ENCODE measurements at regions of chr12 and their contacts with region 1.

Region 1: DNA sequence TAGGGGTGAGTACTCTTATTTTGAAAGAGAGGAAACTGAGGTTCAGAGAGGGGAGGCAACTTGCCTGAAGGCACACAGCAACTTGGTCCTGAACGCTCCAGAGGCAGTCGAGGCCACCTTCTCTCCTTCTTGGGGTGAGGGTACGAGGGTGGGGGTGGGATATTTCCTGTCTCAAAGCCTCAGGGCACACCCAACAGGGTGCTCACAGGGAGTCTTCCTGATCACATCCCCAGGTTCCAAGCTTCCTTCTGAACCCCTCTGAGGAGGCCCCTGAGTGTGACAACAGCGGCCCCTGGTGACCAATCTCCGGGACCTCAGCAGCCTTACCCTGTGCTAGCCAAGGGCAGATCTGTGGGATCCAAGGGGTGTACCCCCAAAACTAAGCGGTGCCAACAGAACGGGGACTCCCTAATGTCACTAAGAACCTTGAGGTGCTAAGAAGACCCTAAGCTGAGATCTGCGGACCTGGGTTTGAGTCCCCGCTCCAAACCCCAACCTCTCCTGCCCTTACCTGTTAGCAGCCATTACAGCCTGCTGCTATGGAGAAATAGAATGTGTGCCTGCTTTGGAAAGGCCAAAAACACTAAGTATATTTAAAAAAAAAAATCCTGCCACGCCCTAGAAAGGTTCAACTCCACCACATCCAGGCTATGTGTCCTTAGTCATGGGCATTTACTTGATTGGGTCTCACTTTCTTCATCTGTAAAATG is 57.9 kb downstream of the TRPV4 start:
- DNase-seq: peak; percentile 68 to 89 (median 78)
- H3K4me3 ChIP-seq: no peak overlapping the region
- H3K27ac ChIP-seq: peak overlapping the region in 11 of 59 donors; percentile 12 to 86 (median 69)
- H3K27me3 ChIP-seq: no peaks in the 10 kb centered on the region
- CTCF ChIP-seq: peak; percentile 49 to 96 (median 88)

Region 2: DNA sequence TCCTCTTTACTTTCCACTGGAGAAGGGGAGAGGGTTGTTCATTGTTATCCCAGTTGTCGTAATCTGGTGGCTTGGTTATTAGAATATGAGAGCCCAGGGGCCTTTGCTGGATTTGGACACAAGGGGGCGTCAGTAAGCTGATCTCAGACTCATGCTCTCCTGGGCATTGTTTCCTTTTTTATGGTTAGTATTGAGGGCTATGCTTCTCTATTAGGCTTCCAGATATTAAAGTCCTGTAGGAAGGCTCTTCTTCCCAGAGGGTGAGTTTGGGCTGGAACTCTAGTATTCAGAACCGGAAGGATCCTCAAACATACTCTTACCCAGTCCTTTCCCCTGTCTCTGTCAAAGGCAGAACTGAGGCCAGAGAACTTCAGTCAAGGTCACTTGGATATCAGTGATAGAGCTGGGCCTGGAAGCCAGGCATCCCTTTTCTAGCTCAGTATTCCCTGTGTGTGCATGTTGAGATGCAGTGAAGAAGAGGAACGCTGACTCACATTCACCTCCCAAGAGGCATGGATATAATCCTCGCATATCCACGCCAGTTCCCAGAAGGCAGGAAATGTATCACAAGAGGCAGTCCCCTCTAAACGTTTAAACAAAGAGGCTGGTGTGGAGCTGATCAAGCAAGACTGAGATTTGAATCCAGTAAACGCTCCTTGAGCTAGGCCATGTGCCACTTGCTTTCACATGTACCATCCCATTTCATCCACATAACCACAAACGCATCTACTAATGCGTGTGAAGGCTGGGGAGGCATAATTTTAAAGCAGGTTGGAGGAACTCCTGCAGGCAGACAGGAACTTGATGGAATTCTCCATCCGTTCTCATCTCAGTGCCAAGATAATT is 256.3 kb before region 1 on chr12:
- intact Hi-C with region 1: loop called (anchors 2 kb)
- DNase-seq: peak in 9 of 10 donors; percentile 52 to 93 (median 75)
- H3K4me3 ChIP-seq: no peak overlapping the region
- H3K27ac ChIP-seq: peak overlapping the region in 54 of 59 donors; percentile 2 to 85 (median 65)
- H3K27me3 ChIP-seq: no peaks in the 10 kb centered on the region
- CTCF ChIP-seq: peak; percentile 76 to 95 (median 86)

Region 3: DNA sequence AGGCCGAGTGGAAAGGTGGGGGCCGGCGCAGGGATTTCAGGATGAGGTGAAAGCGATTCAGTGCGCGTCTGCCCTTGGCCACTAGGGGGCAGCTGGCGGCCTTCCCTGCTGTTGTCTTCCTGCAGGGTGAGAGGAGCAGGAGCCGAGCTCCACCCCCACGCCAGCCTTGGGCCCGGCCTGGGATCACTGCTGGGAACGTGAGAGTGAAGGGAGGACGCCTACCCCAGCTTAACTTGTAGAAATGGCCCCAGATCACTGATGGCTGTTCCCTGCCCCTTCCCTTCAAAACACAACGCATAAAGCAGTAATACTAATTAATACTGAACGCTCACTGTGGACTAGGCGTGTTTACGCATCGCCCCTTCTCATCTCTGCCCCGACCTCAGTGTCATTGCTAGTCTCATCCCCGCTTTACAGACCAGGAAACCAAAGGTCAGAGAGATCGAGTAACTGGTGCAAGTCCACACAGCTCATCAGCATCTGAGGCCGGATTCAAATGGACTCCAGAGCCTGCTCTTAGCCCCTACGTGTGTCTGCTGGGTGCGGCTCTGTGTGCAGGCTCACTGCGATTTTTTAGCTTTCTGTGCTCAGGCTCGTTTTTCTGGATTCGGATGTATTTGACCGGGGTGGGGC is 177.4 kb before region 1 on chr12:
- intact Hi-C with region 1: loop called (anchors 2 kb)
- DNase-seq: peak; percentile 90 to 92 (median 91)
- H3K4me3 ChIP-seq: peak overlapping the region in 15 of 59 donors; percentile 2 to 37 (median 19)
- H3K27ac ChIP-seq: peak overlapping the region in 58 of 59 donors; percentile 7 to 91 (median 85)
- H3K27me3 ChIP-seq: no peaks in the 10 kb centered on the region
- CTCF ChIP-seq: peak; percentile 89 to 99 (median 97)

Region 4: DNA sequence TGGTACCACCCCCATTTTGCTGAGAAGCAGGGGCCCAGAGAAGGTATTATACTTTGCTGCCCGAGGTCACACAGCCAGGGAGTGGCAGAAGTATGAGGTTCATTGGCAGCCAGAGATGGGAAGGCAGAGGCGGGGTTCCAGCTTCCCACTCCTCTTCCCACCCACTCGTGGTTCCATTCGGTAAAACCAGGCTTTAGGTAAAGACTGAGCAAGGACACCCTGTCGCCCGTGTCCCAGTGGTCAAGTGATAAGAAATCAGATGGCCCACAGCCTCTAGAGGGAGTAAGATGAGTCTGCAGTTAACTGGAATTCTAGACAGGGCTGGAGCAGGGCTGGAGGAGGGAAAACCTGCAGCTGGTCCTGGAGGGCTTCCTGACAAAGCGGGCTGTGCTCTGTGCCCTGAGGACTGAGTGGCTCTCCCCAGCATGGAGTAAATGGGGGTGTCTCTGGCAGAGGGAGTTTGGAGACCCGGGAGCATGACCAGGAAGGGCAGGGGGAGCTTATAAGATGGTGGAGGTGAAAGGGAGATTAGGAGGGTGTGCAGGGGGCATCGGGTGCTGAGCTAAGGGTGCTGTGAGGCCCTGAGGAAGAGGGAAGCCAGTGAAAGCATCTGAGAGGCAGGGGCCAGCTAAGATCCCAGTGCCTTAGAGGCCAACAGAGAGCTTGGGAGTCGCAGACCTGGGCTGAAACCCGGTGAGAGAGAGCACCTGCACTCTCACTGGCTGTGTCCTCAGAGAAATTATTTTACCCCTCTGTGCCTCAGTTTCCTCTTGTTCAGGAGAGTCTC is 55.9 kb before region 1 on chr12:
- intact Hi-C with region 1: loop called (anchors 1 to 2 kb)
- DNase-seq: no peak
- H3K4me3 ChIP-seq: peak overlapping the region in 37 of 59 donors; percentile 6 to 89 (median 78)
- H3K27ac ChIP-seq: peak overlapping the region in 58 of 59 donors; percentile 20 to 97 (median 84)
- H3K27me3 ChIP-seq: peaks cover 0 to 5% (median 0%) of the 10 kb centered on the region in 45 donors
- CTCF ChIP-seq: peak in 41 of 56 donors; percentile 12 to 53 (median 30)

Region 5: GRCh38 chr12:110869026-110869425 is 1093.7 kb after region 1 on chr12:
- intact Hi-C with region 1: no loop called
- DNase-seq: no peak
- H3K4me3 ChIP-seq: no peak overlapping the region
- H3K27ac ChIP-seq: no peak overlapping the region
- H3K27me3 ChIP-seq: no peaks in the 10 kb centered on the region
- CTCF ChIP-seq: no peak